B cell (primary cell): ENCODE measurements at regions of chr17 and their contacts with region 1.

Region 1: DNA sequence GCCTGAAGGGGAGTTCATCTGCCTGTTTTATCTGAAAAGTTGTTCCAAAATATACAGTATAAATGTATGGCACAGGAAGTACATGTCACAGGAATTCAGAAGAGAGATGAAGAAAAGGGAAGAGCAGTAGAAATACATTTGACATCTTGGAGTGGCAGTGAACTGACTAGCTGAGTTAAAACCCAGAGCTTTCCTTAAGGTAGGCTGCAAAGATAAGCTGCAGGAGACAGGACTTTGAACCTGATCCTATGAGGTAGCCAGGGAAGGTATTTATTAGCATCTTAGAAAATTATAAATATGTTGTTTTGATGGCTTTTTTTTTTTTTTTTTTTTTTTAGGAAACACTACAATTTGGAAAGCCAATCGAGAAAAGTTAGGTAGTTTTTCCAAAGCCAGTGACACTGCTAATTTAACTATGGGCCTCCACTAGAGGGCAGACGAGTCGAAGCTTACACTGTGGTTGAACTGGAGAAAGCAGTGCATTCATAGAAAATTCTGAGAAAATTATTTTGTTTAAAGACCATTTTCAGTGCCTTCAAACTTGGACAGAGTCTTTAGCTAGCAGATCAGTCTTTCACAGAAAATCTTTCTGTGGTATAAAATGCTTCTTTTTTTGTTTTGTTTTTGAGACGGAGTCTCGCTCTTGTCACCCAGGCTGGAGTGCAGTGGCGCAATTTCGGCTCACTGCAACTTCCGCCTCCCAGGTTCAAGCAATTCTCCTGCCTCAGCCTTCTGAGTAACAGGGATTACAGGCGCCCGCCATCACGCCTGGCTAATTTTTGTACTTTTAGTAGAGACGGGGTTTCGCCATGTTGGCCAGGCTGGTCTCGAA is 122.3 kb downstream of the SSH2 start:
- DNase-seq: peak; percentile 76
- ATAC-seq: peak; percentile 77
- H3K4me3 ChIP-seq: peak overlapping the region in 1 of 5 experiments; percentile 9
- H3K4me3 Mint-ChIP-seq: peak overlapping the region; percentile 4
- H3K27ac ChIP-seq: no peak overlapping the region
- H3K27ac Mint-ChIP-seq: no peak overlapping the region
- H3K4me1 ChIP-seq: peaks cover 23 to 29% of the 10 kb centered on the region in 2 donors
- H3K4me1 Mint-ChIP-seq: peaks cover 27% of the 10 kb centered on the region
- H3K27me3 ChIP-seq: no peaks in the 10 kb centered on the region
- H3K27me3 Mint-ChIP-seq: no peaks in the 10 kb centered on the region
- CTCF ChIP-seq: peak; percentile 94

Region 2: GRCh38 chr17:29420128-29420527 is 387.6 kb before region 1 on chr17:
- CTCF ChIA-PET with region 1: no interaction called
- POLR2A ChIA-PET with region 1: no interaction called
- intact Hi-C with region 1: no loop called
- DNase-seq: no peak
- ATAC-seq: no peak
- H3K4me3 ChIP-seq: no peak overlapping the region
- H3K4me3 Mint-ChIP-seq: no peak overlapping the region
- H3K27ac ChIP-seq: no peak overlapping the region
- H3K27ac Mint-ChIP-seq: no peak overlapping the region
- H3K4me1 ChIP-seq: no peaks in the 10 kb centered on the region
- H3K4me1 Mint-ChIP-seq: peaks cover 5% of the 10 kb centered on the region
- H3K27me3 ChIP-seq: no peaks in the 10 kb centered on the region
- H3K27me3 Mint-ChIP-seq: no peaks in the 10 kb centered on the region
- CTCF ChIP-seq: no peak

Region 3: GRCh38 chr17:29504711-29505110 is 303.0 kb before region 1 on chr17:
- CTCF ChIA-PET with region 1: no interaction called
- POLR2A ChIA-PET with region 1: no interaction called
- intact Hi-C with region 1: no loop called
- DNase-seq: no peak
- ATAC-seq: no peak
- H3K4me3 ChIP-seq: no peak overlapping the region
- H3K4me3 Mint-ChIP-seq: no peak overlapping the region
- H3K27ac ChIP-seq: no peak overlapping the region
- H3K27ac Mint-ChIP-seq: no peak overlapping the region
- H3K4me1 ChIP-seq: no peaks in the 10 kb centered on the region
- H3K4me1 Mint-ChIP-seq: no peaks in the 10 kb centered on the region
- H3K27me3 ChIP-seq: no peaks in the 10 kb centered on the region
- H3K27me3 Mint-ChIP-seq: no peaks in the 10 kb centered on the region
- CTCF ChIP-seq: no peak

Region 4: GRCh38 chr17:29524460-29525091 is 283.2 kb before region 1 on chr17:
- CTCF ChIA-PET with region 1: no interaction called
- POLR2A ChIA-PET with region 1: no interaction called
- intact Hi-C with region 1: no loop called
- DNase-seq: no peak
- ATAC-seq: no peak
- H3K4me3 ChIP-seq: no peak overlapping the region
- H3K4me3 Mint-ChIP-seq: no peak overlapping the region
- H3K27ac ChIP-seq: no peak overlapping the region
- H3K27ac Mint-ChIP-seq: no peak overlapping the region
- H3K4me1 ChIP-seq: no peaks in the 10 kb centered on the region
- H3K4me1 Mint-ChIP-seq: no peaks in the 10 kb centered on the region
- H3K27me3 ChIP-seq: no peaks in the 10 kb centered on the region
- H3K27me3 Mint-ChIP-seq: no peaks in the 10 kb centered on the region
- CTCF ChIP-seq: no peak

Region 5: GRCh38 chr17:29640413-29640812 is 167.3 kb before region 1 on chr17:
- CTCF ChIA-PET with region 1: interaction called, 33 read pairs
- POLR2A ChIA-PET with region 1: no interaction called
- intact Hi-C with region 1: no loop called
- DNase-seq: no peak
- ATAC-seq: no peak
- H3K4me3 ChIP-seq: no peak overlapping the region
- H3K4me3 Mint-ChIP-seq: no peak overlapping the region
- H3K27ac ChIP-seq: peak overlapping the region in 1 of 2 donors; percentile 64
- H3K27ac Mint-ChIP-seq: peak overlapping the region; percentile 65
- H3K4me1 ChIP-seq: peaks cover 15 to 19% of the 10 kb centered on the region in 2 donors
- H3K4me1 Mint-ChIP-seq: peaks cover 32% of the 10 kb centered on the region
- H3K27me3 ChIP-seq: no peaks in the 10 kb centered on the region
- H3K27me3 Mint-ChIP-seq: no peaks in the 10 kb centered on the region
- CTCF ChIP-seq: no peak

Region 6: DNA sequence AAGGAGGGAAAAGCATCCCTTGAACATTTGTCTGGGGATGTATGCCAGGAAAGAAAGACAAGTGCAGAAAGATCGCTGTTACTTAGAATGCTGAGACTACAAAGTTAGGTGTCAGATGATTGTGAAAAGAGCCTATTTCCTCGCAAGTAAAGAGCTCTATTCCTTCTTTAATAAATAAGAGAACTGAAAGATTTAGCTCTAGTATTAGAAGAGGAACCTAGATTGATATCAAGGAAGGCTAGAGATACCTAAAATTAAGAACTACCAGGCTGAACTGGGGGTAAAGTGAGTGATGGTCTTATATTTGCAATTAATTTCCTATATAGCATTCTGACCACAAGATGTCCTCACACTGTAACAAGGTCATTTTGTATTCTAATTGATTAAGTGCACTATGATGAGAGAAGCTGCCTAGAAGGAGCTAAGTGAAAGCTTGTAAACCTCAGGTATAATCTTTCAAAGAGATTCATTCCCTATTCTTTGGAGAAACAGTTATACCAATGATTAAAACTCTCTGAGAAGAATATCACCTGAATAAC is 60.0 kb after region 1 on chr17:
- CTCF ChIA-PET with region 1: interaction called, 13 read pairs
- POLR2A ChIA-PET with region 1: no interaction called
- intact Hi-C with region 1: no loop called
- DNase-seq: peak; percentile 29
- ATAC-seq: no peak
- H3K4me3 ChIP-seq: no peak overlapping the region
- H3K4me3 Mint-ChIP-seq: no peak overlapping the region
- H3K27ac ChIP-seq: no peak overlapping the region
- H3K27ac Mint-ChIP-seq: no peak overlapping the region
- H3K4me1 ChIP-seq: peaks cover 21 to 32% of the 10 kb centered on the region in 2 donors
- H3K4me1 Mint-ChIP-seq: peaks cover 45% of the 10 kb centered on the region
- H3K27me3 ChIP-seq: no peaks in the 10 kb centered on the region
- H3K27me3 Mint-ChIP-seq: no peaks in the 10 kb centered on the region
- CTCF ChIP-seq: no peak

Region 7: GRCh38 chr17:30000001-30000754 is 192.4 kb after region 1 on chr17:
- CTCF ChIA-PET with region 1: interaction called, 14 read pairs
- POLR2A ChIA-PET with region 1: no interaction called
- intact Hi-C with region 1: loop called (anchors 5 kb)
- DNase-seq: no peak
- ATAC-seq: no peak
- H3K4me3 ChIP-seq: no peak overlapping the region
- H3K4me3 Mint-ChIP-seq: no peak overlapping the region
- H3K27ac ChIP-seq: no peak overlapping the region
- H3K27ac Mint-ChIP-seq: no peak overlapping the region
- H3K4me1 ChIP-seq: no peaks in the 10 kb centered on the region
- H3K4me1 Mint-ChIP-seq: peaks cover 3% of the 10 kb centered on the region
- H3K27me3 ChIP-seq: no peaks in the 10 kb centered on the region
- H3K27me3 Mint-ChIP-seq: no peaks in the 10 kb centered on the region
- CTCF ChIP-seq: no peak

Region 8: GRCh38 chr17:30093463-30094147 is 285.9 kb after region 1 on chr17:
- CTCF ChIA-PET with region 1: interaction called, 71 read pairs
- POLR2A ChIA-PET with region 1: no interaction called
- intact Hi-C with region 1: loop called (anchors 1 kb)
- DNase-seq: peak; percentile 75
- ATAC-seq: peak; percentile 57
- H3K4me3 ChIP-seq: no peak overlapping the region
- H3K4me3 Mint-ChIP-seq: no peak overlapping the region
- H3K27ac ChIP-seq: no peak overlapping the region
- H3K27ac Mint-ChIP-seq: no peak overlapping the region
- H3K4me1 ChIP-seq: peaks cover 6 to 7% of the 10 kb centered on the region in 2 donors
- H3K4me1 Mint-ChIP-seq: peaks cover 12% of the 10 kb centered on the region
- H3K27me3 ChIP-seq: peaks cover 0 to 9% (median 8%) of the 10 kb centered on the region in 4 experiments
- H3K27me3 Mint-ChIP-seq: peaks cover 12% of the 10 kb centered on the region
- CTCF ChIP-seq: peak; percentile 90

Region 9: DNA sequence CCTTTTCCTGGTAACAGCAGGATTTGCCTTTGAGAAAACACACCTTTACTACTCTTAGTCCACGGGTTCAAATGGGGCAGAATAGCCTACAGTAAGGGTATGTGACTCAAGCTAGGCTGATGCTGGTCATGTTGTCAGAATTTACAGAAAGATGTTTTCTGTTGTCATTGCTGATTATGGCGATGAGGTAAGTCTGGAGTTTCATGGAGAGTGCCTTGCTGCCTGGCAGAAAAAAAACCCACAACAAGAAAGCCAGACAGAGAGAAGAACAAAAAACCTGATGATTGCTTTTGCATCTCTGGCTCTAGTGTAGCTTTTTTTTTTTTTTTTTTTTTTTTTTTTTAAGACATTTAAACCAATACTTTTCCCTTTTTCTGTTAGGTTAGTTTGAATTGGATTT is 379.8 kb after region 1 on chr17:
- CTCF ChIA-PET with region 1: no interaction called
- POLR2A ChIA-PET with region 1: no interaction called
- intact Hi-C with region 1: no loop called
- DNase-seq: no peak
- ATAC-seq: no peak
- H3K4me3 ChIP-seq: no peak overlapping the region
- H3K4me3 Mint-ChIP-seq: no peak overlapping the region
- H3K27ac ChIP-seq: no peak overlapping the region
- H3K27ac Mint-ChIP-seq: no peak overlapping the region
- H3K4me1 ChIP-seq: no peaks in the 10 kb centered on the region
- H3K4me1 Mint-ChIP-seq: no peaks in the 10 kb centered on the region
- H3K27me3 ChIP-seq: no peaks in the 10 kb centered on the region
- H3K27me3 Mint-ChIP-seq: no peaks in the 10 kb centered on the region
- CTCF ChIP-seq: no peak